ENCODE measurements at regions of chr20 and their contacts with region 1.

Region 1: DNA sequence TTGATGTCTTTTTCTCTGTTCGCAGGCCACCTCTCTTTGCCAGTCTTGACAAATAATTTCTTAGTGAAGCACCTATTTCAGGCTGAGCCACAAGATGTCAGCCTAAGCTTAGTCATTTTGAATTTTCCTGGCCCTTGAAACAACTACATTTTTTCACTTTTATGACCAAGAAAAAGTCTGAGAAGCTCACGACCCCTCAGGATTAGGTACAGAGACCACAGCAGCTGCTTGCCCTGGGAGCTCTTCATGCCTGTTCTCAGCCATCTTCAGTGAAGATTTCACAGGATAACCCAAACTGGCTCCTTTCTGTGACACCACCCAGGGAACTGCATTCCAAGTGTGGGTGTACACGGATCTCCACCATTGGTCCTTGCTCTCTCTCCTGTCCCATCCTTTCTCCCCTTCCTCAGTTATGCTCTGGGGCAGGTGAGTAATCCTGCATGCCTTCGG is 38.4 kb upstream of the SPTLC3 start:
- DNase-seq: no peak
- H3K4me3 ChIP-seq: no peak overlapping the region
- CTCF ChIP-seq: peak; percentile 54

Region 2: DNA sequence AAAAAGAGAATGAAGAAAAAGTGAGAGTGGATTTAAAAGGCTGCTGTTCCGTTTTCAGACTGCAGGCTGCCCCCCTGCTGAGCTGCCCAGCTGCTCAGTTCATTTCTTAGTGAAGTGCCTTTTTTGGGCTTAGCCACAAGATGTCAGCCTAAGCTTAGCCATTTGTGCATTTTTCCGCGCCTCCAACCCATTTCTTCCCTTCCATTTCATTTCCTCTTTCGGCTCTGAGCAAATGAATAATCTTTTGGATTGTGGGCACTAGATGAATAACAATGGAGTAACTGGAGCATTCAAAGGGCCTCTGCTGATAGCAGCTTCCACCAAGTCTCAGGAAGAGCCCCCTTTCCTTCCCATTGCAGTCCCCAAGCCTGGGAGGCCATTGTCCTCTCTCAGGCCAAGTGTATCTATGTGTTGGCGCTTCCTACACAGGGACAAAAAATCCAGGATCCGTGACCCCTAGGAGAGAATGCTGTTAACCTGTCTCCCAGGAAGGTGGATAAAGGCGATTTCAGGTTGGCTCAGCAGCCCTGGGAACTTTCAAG is 45.1 kb before region 1 on chr20:
- CTCF ChIA-PET with region 1: interaction called, 582 read pairs
- POLR2A ChIA-PET with region 1: no interaction called
- DNase-seq: peak; percentile 52
- H3K4me3 ChIP-seq: no peak overlapping the region
- CTCF ChIP-seq: peak; percentile 88

Region 3: DNA sequence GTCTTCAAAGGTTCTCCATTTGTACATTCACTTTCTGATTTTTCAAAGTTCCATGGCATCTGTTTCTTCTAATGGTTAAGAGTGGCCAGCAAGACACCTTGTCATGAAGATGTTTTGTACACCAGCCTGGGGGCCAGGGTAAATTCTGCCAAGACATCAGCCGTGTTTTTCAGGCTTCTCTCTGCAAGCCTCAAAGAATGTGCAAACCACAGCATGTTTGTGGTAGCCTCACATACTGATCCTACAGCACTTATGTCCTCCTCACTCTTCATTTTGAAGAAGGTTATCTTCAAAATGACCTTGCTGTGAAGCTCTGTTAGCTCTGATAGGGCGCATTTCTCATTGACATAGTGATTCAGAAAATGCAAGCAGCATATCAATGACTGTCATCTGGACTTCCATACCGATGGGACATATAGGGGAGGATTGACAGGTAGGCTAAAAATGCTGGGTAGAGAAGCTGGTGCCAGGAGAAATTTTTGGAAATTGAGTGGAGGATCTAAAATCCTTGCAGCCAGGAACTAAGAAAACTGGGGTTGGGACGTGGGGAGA is 20.9 kb before region 1 on chr20:
- CTCF ChIA-PET with region 1: interaction called, 10 read pairs
- POLR2A ChIA-PET with region 1: no interaction called
- DNase-seq: no peak
- H3K4me3 ChIP-seq: no peak overlapping the region
- CTCF ChIP-seq: no peak

Region 4: DNA sequence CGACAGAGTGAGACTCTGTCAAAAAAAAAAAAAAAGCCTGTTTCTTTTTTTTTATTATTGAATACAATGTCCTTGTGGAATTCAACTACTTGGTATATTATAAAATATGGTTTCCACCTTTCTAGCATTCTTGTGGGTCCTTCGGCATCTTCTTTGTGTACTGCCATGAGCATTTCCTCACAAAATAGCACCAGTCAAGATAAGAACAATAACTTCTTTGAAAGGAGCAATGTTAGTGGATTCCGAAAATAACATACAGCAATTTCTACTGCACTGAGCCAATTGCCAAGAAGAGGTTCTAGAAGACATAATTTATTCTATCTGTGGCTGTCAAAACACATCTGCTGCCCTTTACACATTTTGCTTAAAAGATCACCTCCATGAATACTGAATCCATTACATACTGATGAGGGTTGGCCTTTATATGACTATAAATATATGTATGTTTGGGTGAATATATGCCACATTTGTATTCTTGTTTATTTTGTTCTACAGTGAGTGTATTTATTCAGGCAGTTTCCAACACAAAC is 19.3 kb after region 1 on chr20:
- CTCF ChIA-PET with region 1: interaction called, 10 read pairs
- POLR2A ChIA-PET with region 1: no interaction called
- DNase-seq: no peak
- H3K4me3 ChIP-seq: no peak overlapping the region
- CTCF ChIP-seq: no peak

Region 5: GRCh38 chr20:13111249-13111911 is 141.0 kb after region 1 on chr20:
- CTCF ChIA-PET with region 1: interaction called, 144 read pairs
- POLR2A ChIA-PET with region 1: no interaction called
- DNase-seq: no peak
- H3K4me3 ChIP-seq: no peak overlapping the region
- CTCF ChIP-seq: no peak